Mammary epithelial cell (primary cell): ENCODE measurements at regions of chr3 and their contacts with region 1.

Region 1: DNA sequence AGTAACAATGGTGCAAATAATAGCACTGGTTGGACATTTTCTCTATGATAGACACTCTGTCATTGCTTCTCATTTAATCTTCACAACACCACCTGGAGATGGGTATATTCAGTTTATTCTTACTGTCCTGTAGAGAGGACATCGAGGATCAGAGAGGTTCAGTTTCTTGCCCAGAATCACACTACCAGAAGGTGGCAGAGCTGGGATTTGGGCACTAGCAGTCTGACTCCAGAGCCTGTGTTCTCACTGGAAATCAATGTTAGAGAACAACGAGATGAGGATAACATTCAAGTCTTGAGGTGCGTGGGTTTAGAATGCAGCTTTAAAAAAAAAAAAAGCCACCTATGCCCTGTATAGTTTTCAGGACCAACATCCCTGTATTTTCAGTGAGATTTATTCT is 127.8 kb downstream of the SYNPR start:
- DNase-seq: peak; percentile 9
- H3K4me3 ChIP-seq: no peak overlapping the region
- H3K27ac ChIP-seq: no peak overlapping the region
- H3K4me1 ChIP-seq: no peaks in the 10 kb centered on the region
- H3K27me3 ChIP-seq: no peaks in the 10 kb centered on the region
- CTCF ChIP-seq: peak; percentile 14 to 35

Region 2: DNA sequence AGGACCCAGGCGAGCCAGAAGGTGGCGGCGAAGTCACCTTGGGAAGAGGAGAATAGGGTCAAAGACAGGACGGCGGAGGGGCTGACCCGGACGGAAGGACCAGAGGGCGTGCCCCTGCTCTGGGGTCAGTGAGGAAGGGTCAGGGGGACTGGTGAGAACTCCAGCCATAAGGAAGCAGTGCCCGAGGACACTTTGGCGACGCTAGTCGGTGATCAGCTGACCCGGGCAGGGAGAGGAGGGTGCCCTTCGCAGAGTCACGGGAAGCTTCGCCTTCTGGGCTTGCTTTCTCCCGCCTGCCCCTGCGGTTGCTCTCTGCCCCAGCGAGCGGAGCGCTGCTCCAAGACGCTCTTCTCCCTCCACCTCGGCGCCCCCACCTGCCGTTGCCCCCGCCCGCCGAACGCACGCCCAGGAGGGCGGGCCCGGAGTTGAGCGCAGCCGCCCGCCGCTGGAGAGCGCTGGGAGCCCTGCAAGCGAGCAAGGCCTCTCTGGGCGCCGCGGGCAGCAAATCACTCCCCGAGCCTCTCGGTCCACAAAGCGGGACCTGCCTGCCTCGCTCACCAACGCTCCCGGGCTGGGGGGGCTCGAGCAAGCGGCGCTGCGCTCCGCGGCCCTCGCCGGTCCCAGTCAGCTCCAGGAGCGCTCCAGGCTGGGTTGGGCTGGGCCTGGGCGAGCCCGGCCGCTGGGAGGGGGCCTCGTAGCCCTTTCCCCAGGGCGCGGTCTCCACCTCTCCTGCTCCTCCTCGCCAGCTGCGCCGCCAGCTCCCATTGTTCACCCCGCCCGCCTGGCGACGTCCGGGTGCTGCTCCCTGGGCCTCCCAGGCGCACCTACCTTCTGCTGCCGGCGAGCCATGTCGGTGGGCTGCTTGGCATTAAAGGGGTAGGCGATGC is 531.9 kb before region 1 on chr3:
- CTCF ChIA-PET with region 1: no interaction called
- dilution Hi-C with region 1: no loop called
- in situ Hi-C with region 1: no loop called
- intact Hi-C with region 1: no loop called
- DNase-seq: no peak
- H3K4me3 ChIP-seq: peak overlapping the region; percentile 6 to 35 (median 30)
- H3K27ac ChIP-seq: no peak overlapping the region
- H3K4me1 ChIP-seq: peaks cover 23% of the 10 kb centered on the region
- H3K27me3 ChIP-seq: peaks cover 29% of the 10 kb centered on the region
- CTCF ChIP-seq: peak in 1 of 2 donors; percentile 3

Region 3: GRCh38 chr3:63364910-63365431 is 40.9 kb before region 1 on chr3:
- CTCF ChIA-PET with region 1: no interaction called
- dilution Hi-C with region 1: loop called (anchors 5 kb)
- in situ Hi-C with region 1: no loop called
- intact Hi-C with region 1: no loop called
- DNase-seq: no peak
- H3K4me3 ChIP-seq: no peak overlapping the region
- H3K27ac ChIP-seq: no peak overlapping the region
- H3K4me1 ChIP-seq: no peaks in the 10 kb centered on the region
- H3K27me3 ChIP-seq: no peaks in the 10 kb centered on the region
- CTCF ChIP-seq: peak; percentile 17 to 26

Region 4: GRCh38 chr3:63661248-63661647 is 255.4 kb after region 1 on chr3:
- CTCF ChIA-PET with region 1: no interaction called
- dilution Hi-C with region 1: no loop called
- in situ Hi-C with region 1: no loop called
- intact Hi-C with region 1: loop called (anchors 2 kb)
- DNase-seq: no peak
- H3K4me3 ChIP-seq: no peak overlapping the region
- H3K27ac ChIP-seq: no peak overlapping the region
- H3K4me1 ChIP-seq: peaks cover under 1% of the 10 kb centered on the region
- H3K27me3 ChIP-seq: no peaks in the 10 kb centered on the region
- CTCF ChIP-seq: peak; percentile 4 to 24